Mammary epithelial cell (primary cell): ENCODE measurements at regions of chr2 and their contacts with region 1.

Region 1: DNA sequence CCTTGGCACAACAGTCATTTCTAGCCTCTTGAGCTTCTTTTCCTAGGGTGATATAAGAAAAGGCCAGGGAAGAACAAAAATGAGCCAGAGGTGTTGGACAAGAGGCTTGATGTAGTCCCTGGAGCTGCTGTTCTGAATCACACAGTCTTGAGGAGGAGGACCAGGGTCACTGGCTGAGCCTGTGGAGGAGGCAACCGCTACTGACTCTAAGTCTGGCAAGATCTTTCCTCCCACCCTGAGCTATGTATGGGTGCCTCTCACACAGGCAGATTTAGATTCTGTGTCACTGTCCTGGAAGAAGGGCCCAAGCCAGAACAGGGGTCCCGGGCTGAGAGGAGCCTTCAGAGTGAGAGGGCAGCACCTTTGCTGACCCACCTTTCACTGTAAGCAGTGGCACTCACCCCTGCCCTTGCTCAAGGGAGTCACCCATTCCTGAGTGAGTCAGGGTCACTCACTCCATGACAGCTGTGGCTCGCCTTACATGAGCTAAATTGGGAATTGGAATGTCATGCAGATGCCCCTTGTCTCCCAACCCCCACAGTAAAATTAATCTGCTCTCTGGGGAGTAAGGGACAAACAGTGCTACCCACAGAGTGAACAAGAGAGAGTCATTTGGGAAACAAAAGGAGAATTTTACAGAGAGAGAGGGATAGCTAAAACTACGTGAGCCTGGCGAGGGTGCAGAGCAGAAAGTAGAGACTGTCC is at the start of gene TRIM54:
- DNase-seq: no peak
- H3K4me3 ChIP-seq: no peak within 1 kb of the TSS
- H3K27ac ChIP-seq: no peak within 1 kb of the TSS
- H3K4me1 ChIP-seq: no peaks in the 10 kb centered on the region
- H3K27me3 ChIP-seq: no peaks in the 10 kb centered on the region
- CTCF ChIP-seq: no peak
- total RNA-seq, gene TRIM54: not detected

Region 2: GRCh38 chr2:26959331-26959730 is 322.7 kb before region 1 on chr2:
- CTCF ChIA-PET with region 1: interaction called, 13 read pairs
- dilution Hi-C with region 1: no loop called
- in situ Hi-C with region 1: loop called in 1 of 2 experiments (anchors 25 kb)
- intact Hi-C with region 1: loop called (anchors 2 kb)
- DNase-seq: no peak
- H3K4me3 ChIP-seq: no peak overlapping the region
- H3K27ac ChIP-seq: no peak overlapping the region
- H3K4me1 ChIP-seq: no peaks in the 10 kb centered on the region
- H3K27me3 ChIP-seq: peaks cover 16% of the 10 kb centered on the region
- CTCF ChIP-seq: no peak

Region 3: GRCh38 chr2:27086090-27086723 is 195.8 kb before region 1 on chr2:
- CTCF ChIA-PET with region 1: no interaction called
- dilution Hi-C with region 1: no loop called
- in situ Hi-C with region 1: loop called in 1 of 2 experiments (anchors 10 kb)
- intact Hi-C with region 1: no loop called
- DNase-seq: peak; percentile 87
- H3K4me3 ChIP-seq: peak overlapping the region; percentile 57 to 84 (median 63)
- H3K27ac ChIP-seq: peak overlapping the region; percentile 3
- H3K4me1 ChIP-seq: peaks cover 28% of the 10 kb centered on the region
- H3K27me3 ChIP-seq: no peaks in the 10 kb centered on the region
- CTCF ChIP-seq: peak; percentile 59 to 79

Region 4: GRCh38 chr2:27095745-27096651 is 186.0 kb before region 1 on chr2:
- CTCF ChIA-PET with region 1: no interaction called
- dilution Hi-C with region 1: no loop called
- in situ Hi-C with region 1: loop called in 1 of 2 experiments (anchors 5 kb)
- intact Hi-C with region 1: loop called (anchors 1 kb)
- DNase-seq: peak; percentile 15
- H3K4me3 ChIP-seq: no peak overlapping the region
- H3K27ac ChIP-seq: no peak overlapping the region
- H3K4me1 ChIP-seq: no peaks in the 10 kb centered on the region
- H3K27me3 ChIP-seq: no peaks in the 10 kb centered on the region
- CTCF ChIP-seq: no peak

Region 5: DNA sequence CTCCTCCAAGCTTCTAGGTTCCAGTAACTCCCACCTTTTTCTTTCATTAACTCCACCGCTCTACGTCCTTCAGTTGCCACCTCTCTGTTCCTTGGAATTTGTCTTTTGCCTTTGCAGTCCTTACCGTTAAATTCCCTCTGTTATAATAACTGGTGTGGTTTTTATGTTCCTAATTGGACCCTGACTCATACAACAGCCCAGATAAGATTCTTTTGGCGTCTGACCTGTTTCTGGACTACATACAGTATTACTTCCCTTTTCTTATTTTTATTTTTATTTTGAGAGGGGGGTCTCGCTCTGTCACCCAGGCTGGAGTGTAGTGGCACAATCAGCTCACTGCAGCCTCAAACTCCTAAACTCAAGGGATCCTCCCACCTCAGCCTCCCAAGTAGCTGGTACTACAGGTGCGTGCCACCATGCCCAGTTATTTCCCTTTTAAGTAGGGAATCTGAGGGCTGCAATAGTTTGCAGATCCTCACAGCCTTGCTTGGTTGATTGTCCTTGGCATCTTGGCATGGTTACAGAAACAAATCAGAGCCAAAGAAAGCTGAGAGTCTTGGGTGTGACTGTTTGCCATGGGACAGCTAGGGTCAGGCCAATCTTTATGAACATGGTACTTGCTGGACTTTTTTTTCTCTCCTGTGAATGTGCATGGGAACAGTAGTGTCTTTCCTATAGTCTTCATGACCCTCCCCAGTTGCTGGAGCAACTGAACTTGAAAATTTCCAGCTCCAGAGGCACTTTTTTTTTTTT is 111.2 kb before region 1 on chr2:
- CTCF ChIA-PET with region 1: no interaction called
- dilution Hi-C with region 1: no loop called
- in situ Hi-C with region 1: no loop called
- intact Hi-C with region 1: loop called (anchors 1 kb)
- DNase-seq: no peak
- H3K4me3 ChIP-seq: no peak overlapping the region
- H3K27ac ChIP-seq: no peak overlapping the region
- H3K4me1 ChIP-seq: no peaks in the 10 kb centered on the region
- H3K27me3 ChIP-seq: no peaks in the 10 kb centered on the region
- CTCF ChIP-seq: no peak

Region 6: GRCh38 chr2:27249891-27250651 is 31.9 kb before region 1 on chr2:
- CTCF ChIA-PET with region 1: interaction called, 18 read pairs
- dilution Hi-C with region 1: no loop called
- in situ Hi-C with region 1: no loop called
- intact Hi-C with region 1: no loop called
- DNase-seq: no peak
- H3K4me3 ChIP-seq: no peak overlapping the region
- H3K27ac ChIP-seq: no peak overlapping the region
- H3K4me1 ChIP-seq: no peaks in the 10 kb centered on the region
- H3K27me3 ChIP-seq: no peaks in the 10 kb centered on the region
- CTCF ChIP-seq: peak; percentile 45 to 72

Region 7: GRCh38 chr2:27261241-27261925 is 20.6 kb before region 1 on chr2:
- CTCF ChIA-PET with region 1: no interaction called
- dilution Hi-C with region 1: no loop called
- in situ Hi-C with region 1: no loop called
- intact Hi-C with region 1: no loop called
- DNase-seq: no peak
- H3K4me3 ChIP-seq: no peak overlapping the region
- H3K27ac ChIP-seq: no peak overlapping the region
- H3K4me1 ChIP-seq: peaks cover 19% of the 10 kb centered on the region
- H3K27me3 ChIP-seq: peaks cover 48% of the 10 kb centered on the region
- CTCF ChIP-seq: no peak

Region 8: GRCh38 chr2:27303093-27304025 is 21.4 kb after region 1 on chr2:
- CTCF ChIA-PET with region 1: interaction called, 13 read pairs
- dilution Hi-C with region 1: no loop called
- in situ Hi-C with region 1: no loop called
- intact Hi-C with region 1: loop called (anchors 2 kb)
- DNase-seq: peak; percentile 57
- H3K4me3 ChIP-seq: no peak overlapping the region
- H3K27ac ChIP-seq: no peak overlapping the region
- H3K4me1 ChIP-seq: peaks cover 3% of the 10 kb centered on the region
- H3K27me3 ChIP-seq: peaks cover 22% of the 10 kb centered on the region
- CTCF ChIP-seq: peak; percentile 86

Region 9: GRCh38 chr2:27335311-27335710 is 53.3 kb after region 1 on chr2:
- CTCF ChIA-PET with region 1: no interaction called
- dilution Hi-C with region 1: no loop called
- in situ Hi-C with region 1: no loop called
- intact Hi-C with region 1: no loop called
- DNase-seq: no peak
- H3K4me3 ChIP-seq: no peak overlapping the region
- H3K27ac ChIP-seq: no peak overlapping the region
- H3K4me1 ChIP-seq: no peaks in the 10 kb centered on the region
- H3K27me3 ChIP-seq: no peaks in the 10 kb centered on the region
- CTCF ChIP-seq: no peak

Region 10: GRCh38 chr2:27566628-27567027 is 284.6 kb after region 1 on chr2:
- CTCF ChIA-PET with region 1: no interaction called
- dilution Hi-C with region 1: no loop called
- in situ Hi-C with region 1: no loop called
- intact Hi-C with region 1: no loop called
- DNase-seq: peak; percentile 94
- H3K4me3 ChIP-seq: peak overlapping the region in 1 of 3 experiments; percentile 4
- H3K27ac ChIP-seq: peak overlapping the region; percentile 64
- H3K4me1 ChIP-seq: peaks cover 34% of the 10 kb centered on the region
- H3K27me3 ChIP-seq: no peaks in the 10 kb centered on the region
- CTCF ChIP-seq: no peak